Activated naive CD4-positive, alpha-beta T cell treated with anti-CD3 and anti-CD28 coated beads for 36 hours (primary cell): ENCODE measurements at regions of chr10 and their contacts with region 1.

Region 1: DNA sequence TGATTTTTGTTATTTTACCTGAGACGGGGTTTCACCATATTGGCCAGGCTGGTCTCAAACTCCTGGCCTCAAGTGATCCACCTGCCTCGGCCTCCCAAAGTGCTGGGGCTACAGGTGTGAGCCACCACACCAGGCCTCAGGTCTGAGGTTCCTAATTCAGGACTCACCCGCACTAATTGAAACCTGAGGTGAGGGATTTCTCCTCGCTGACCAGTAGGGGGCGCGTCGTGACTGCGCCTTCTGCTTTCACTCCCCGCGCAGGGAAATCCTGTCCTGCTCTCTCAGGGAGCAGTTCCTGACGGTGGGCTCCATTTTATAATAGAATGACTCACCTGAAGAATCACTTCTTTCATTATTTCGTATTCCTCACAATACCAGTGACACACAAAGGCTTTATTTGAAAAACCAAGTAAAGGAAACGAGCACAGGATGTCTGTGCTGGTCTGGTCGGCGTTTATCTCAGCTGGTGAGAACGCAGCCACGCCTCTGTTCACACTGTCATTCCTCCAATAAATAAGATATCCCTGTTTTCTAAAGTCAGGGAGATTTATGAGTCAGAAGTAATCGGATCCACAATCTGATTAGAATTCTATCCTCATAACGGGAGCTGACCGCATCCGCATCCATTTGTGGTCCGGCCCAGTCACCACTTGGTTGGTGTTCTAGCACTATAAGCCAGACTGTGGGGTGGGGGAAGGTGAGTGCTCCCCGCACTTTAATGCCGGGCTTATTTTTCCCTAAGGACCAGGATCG is 35.4 kb downstream of the BAG3 start:
- DNase-seq: peak; percentile 93
- H3K4me3 Mint-ChIP-seq: peak overlapping the region; percentile 23
- H3K27ac Mint-ChIP-seq: peak overlapping the region; percentile 63
- H3K4me1 Mint-ChIP-seq: peaks cover 25% of the 10 kb centered on the region
- H3K27me3 Mint-ChIP-seq: no peaks in the 10 kb centered on the region

Region 2: GRCh38 chr10:119416855-119417254 is 269.8 kb before region 1 on chr10:
- CTCF ChIA-PET with region 1: no interaction called
- intact Hi-C with region 1: no loop called
- DNase-seq: peak; percentile 85
- H3K4me3 Mint-ChIP-seq: no peak overlapping the region
- H3K27ac Mint-ChIP-seq: no peak overlapping the region
- H3K4me1 Mint-ChIP-seq: peaks cover 1% of the 10 kb centered on the region
- H3K27me3 Mint-ChIP-seq: no peaks in the 10 kb centered on the region

Region 3: GRCh38 chr10:119608316-119609155 is 78.1 kb before region 1 on chr10:
- CTCF ChIA-PET with region 1: interaction called, 6 read pairs
- intact Hi-C with region 1: loop called (anchors 1 kb)
- DNase-seq: peak; percentile 68
- H3K4me3 Mint-ChIP-seq: peak overlapping the region; percentile 33
- H3K27ac Mint-ChIP-seq: no peak overlapping the region
- H3K4me1 Mint-ChIP-seq: peaks cover 9% of the 10 kb centered on the region
- H3K27me3 Mint-ChIP-seq: no peaks in the 10 kb centered on the region

Region 4: DNA sequence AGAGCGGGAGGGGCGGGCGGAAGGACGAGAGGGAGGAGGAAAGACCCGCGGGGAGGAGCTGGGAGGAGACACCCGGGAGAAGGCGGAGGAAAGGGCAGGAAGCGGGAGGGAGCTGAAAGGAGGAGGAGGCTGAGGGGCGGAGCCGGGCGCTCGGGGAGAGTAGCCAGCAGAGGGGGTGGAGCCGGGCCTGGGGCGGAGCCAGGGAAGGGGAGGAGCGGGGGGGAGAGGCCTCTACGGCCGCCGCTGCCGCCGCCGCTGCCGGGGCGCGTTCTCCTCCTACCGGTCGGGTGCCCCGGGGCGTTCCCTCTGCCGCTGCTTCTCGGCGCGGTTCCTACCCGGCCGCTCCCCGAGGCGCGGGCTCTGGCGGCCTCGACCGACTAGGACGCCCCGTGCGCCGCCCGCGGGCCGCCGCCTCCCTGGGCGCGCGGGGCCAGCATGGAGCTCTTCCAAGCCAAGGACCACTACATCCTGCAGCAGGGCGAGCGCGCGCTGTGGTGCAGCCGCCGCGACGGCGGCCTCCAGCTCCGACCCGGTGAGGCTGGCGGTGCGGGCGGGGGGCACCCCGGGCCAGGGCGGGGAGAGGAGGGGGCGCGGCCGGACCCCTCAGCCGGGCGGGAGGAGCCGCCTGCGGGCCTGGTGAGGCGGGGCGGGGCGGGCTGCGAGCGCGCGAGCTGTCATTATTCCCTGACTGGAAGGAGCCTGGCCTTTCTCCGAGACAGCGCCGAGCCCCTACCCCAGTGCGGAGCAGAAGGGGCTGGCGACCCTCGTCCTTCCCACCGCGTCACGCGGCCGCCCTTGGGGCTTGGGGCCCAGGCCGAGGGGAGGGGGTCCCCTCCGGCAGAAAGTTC is 39.4 kb after region 1 on chr10 and contains the start of gene INPP5F:
- CTCF ChIA-PET with region 1: interaction called, 12 read pairs
- intact Hi-C with region 1: loop called (anchors 1 kb)
- DNase-seq: peak; percentile 100
- H3K4me3 Mint-ChIP-seq: peak within 1 kb of the TSS; percentile 88
- H3K27ac Mint-ChIP-seq: peak within 1 kb of the TSS; percentile 78
- H3K4me1 Mint-ChIP-seq: peaks cover 41% of the 10 kb centered on the region
- H3K27me3 Mint-ChIP-seq: no peaks in the 10 kb centered on the region
- total RNA-seq, gene INPP5F: 10.5 to 10.9 TPM

Region 5: DNA sequence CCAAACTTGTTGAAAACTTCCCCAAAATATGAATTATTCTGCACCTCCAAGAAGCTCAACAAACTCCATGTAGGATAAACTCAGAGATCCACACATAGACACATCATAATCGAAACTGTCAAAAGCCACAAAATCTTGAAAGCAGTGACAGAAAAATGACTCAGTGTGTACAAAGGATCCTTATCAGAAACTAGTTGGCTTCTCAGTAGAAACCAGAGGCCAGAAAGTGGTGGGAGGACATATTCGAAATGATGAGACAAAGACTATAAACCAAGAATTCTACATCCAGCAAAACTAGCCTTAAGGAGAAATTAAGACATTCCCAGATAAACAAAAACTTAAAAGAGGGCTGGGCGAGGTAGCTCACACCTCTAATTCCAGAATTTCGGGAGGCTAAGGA is 147.6 kb after region 1 on chr10:
- CTCF ChIA-PET with region 1: interaction called, 6 read pairs
- intact Hi-C with region 1: loop called (anchors 1 kb)
- DNase-seq: peak; percentile 18
- H3K4me3 Mint-ChIP-seq: no peak overlapping the region
- H3K27ac Mint-ChIP-seq: peak overlapping the region; percentile 46
- H3K4me1 Mint-ChIP-seq: peaks cover 23% of the 10 kb centered on the region
- H3K27me3 Mint-ChIP-seq: no peaks in the 10 kb centered on the region

Region 6: DNA sequence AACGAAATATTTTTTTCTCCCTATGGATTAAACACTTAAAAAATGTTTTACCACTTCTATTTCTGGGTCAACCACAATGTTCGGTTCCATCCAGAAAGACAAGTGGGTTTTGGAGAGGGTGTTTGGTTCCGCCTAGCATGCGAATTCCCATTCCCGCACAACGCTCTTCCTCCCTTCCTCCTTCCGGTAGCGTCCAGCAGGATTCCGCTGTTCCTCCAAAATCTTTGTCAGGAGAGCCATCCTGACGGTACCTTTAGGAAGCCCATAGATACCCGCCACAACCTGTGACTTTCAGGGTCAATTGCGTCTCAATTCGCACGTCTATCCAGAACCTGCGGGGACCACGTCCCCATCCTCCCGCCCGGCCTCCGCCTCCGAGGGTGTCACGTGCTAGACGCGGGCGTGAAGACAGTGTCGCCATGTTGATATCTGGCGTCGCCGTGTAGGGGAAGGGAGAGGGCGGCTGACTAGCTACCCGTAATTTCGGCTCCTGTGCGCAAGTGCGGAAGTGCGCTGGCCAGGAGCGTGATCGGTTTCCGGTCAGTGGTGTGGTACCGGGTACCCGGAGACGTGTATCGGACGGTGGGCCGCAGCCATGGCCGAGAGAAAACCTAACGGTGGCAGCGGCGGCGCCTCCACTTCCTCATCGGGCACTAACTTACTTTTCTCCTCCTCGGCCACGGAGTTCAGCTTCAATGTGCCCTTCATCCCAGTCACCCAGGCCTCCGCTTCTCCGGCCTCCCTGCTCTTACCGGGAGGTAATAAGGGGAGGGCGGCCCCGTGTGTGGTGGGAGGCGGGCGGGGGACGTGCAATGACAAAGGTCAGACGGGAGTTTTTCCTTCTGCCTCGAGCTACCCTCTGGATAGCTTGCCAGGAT is 205.8 kb after region 1 on chr10 and contains the start of gene SEC23IP:
- CTCF ChIA-PET with region 1: interaction called, 3 read pairs
- intact Hi-C with region 1: loop called (anchors 1 kb)
- DNase-seq: peak; percentile 95
- H3K4me3 Mint-ChIP-seq: peak within 1 kb of the TSS; percentile 95
- H3K27ac Mint-ChIP-seq: peak within 1 kb of the TSS; percentile 92
- H3K4me1 Mint-ChIP-seq: peaks cover 49% of the 10 kb centered on the region
- H3K27me3 Mint-ChIP-seq: no peaks in the 10 kb centered on the region
- total RNA-seq, gene SEC23IP: 49.0 to 55.2 TPM

Region 7: DNA sequence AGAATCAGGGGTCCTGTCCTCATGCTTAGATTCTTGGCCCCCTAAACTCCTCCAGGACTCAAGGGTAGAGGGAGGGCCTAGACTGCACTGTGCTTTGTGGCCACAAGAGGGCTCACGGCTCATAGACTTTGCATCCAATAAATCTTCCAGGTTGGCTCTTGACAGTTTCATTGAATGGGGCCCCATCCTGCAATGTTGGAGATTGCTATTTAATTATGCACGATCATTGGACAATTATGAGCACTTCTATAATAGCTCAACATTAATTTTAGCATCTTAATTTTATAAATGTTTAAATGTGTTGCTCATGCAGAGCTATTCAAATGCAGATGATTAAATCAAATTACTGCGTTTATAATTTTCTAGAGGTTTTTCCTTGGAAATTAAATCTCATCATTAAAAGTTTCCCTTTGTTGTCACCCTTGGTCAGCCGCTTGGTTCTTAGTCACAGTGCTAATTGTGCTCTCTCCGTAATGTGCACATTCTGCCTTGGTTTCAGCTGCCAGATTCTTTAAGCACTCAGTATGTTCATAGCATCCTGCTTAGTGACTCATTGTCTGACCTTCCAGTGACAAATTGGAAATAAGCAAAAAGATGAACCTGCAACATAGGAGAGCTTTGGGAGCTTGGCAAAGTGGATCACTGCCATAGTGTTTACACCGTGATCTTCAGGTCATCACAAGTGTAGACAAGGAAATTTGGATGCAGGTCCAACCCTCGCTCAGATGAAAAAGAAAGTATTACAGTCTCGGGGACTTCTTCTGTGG is 737.0 kb after region 1 on chr10:
- CTCF ChIA-PET with region 1: no interaction called
- intact Hi-C with region 1: loop called (anchors 1 kb)
- DNase-seq: peak; percentile 52
- H3K4me3 Mint-ChIP-seq: no peak overlapping the region
- H3K27ac Mint-ChIP-seq: no peak overlapping the region
- H3K4me1 Mint-ChIP-seq: no peaks in the 10 kb centered on the region
- H3K27me3 Mint-ChIP-seq: no peaks in the 10 kb centered on the region